Activated naive CD8-positive, alpha-beta T cell treated with anti-CD3 and anti-CD28 coated beads, Interleukin-2, amount 10 ng/mL, durations not matched to agents 7 days and 5 days (primary cell): ENCODE measurements at regions of chr10 and their contacts with region 1.

Region 1: GRCh38 chr10:22714479-22715289 is at the start of gene PIP4K2A:
- DNase-seq: peak; percentile 90
- ATAC-seq: peak; percentile 90
- H3K4me3 Mint-ChIP-seq: peak within 1 kb of the TSS; percentile 86
- H3K27ac Mint-ChIP-seq: peak within 1 kb of the TSS; percentile 90
- H3K4me1 Mint-ChIP-seq: peaks cover 30% of the 10 kb centered on the region
- H3K27me3 Mint-ChIP-seq: no peaks in the 10 kb centered on the region
- total RNA-seq, gene PIP4K2A: 179 to 199 TPM

Region 2: GRCh38 chr10:22601618-22602017 is 113.1 kb before region 1 on chr10:
- POLR2A ChIA-PET with region 1: interaction called, 11 read pairs
- DNase-seq: no peak
- ATAC-seq: no peak
- H3K4me3 Mint-ChIP-seq: peak overlapping the region; percentile 52
- H3K27ac Mint-ChIP-seq: peak overlapping the region; percentile 88
- H3K4me1 Mint-ChIP-seq: peaks cover 71% of the 10 kb centered on the region
- H3K27me3 Mint-ChIP-seq: no peaks in the 10 kb centered on the region

Region 3: DNA sequence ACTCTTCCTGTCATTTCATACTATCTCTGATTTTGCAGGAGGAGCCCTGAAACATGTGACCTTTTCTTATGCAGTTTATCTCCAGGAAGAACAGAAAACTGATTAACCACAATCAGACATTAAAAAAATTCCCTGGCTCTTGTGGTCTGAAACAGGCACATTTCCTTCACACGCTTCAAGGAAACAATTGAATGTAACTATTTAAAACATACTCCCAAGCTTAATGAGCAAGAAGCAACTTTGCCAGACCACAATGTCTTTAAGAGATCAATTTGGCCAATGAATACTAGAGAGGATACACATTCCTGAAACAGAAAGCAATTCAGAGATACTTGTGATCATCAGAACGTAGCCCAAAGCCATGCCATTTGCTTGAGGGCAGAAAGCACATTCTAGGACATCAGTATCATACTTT is 66.1 kb before region 1 on chr10:
- POLR2A ChIA-PET with region 1: interaction called, 10 read pairs
- DNase-seq: no peak
- ATAC-seq: no peak
- H3K4me3 Mint-ChIP-seq: peak overlapping the region; percentile 78
- H3K27ac Mint-ChIP-seq: peak overlapping the region; percentile 93
- H3K4me1 Mint-ChIP-seq: peaks cover 86% of the 10 kb centered on the region
- H3K27me3 Mint-ChIP-seq: no peaks in the 10 kb centered on the region

Region 4: GRCh38 chr10:22682237-22683139 is 32.2 kb before region 1 on chr10:
- POLR2A ChIA-PET with region 1: interaction called, 33 read pairs
- DNase-seq: peak; percentile 69
- ATAC-seq: peak; percentile 54
- H3K4me3 Mint-ChIP-seq: peak overlapping the region; percentile 71
- H3K27ac Mint-ChIP-seq: peak overlapping the region; percentile 96
- H3K4me1 Mint-ChIP-seq: peaks cover 80% of the 10 kb centered on the region
- H3K27me3 Mint-ChIP-seq: no peaks in the 10 kb centered on the region

Region 5: GRCh38 chr10:22780474-22780885 is 65.8 kb after region 1 on chr10:
- POLR2A ChIA-PET with region 1: no interaction called
- DNase-seq: no peak
- ATAC-seq: no peak
- H3K4me3 Mint-ChIP-seq: no peak overlapping the region
- H3K27ac Mint-ChIP-seq: no peak overlapping the region
- H3K4me1 Mint-ChIP-seq: peaks cover 1% of the 10 kb centered on the region
- H3K27me3 Mint-ChIP-seq: peaks cover 2% of the 10 kb centered on the region